ENCODE measurements at regions of chr6 and their contacts with region 1.

Region 1: GRCh38 chr6:133548414-133549159 is 307.4 kb downstream of the EYA4 start:
- DNase-seq: no peak
- H3K4me3 ChIP-seq: no peak overlapping the region
- CTCF ChIP-seq: no peak
- POLR2A ChIP-seq: no peak

Region 2: GRCh38 chr6:133241086-133241900 is 307.3 kb before region 1 on chr6 and contains the start of gene EYA4:
- intact Hi-C with region 1: no loop called
- DNase-seq: no peak
- H3K4me3 ChIP-seq: peak within 1 kb of the TSS; percentile 1
- CTCF ChIP-seq: no peak
- POLR2A ChIP-seq: no peak
- total RNA-seq, gene EYA4: 0.13 to 0.17 TPM in 2 of 4 donors, not detected in the others

Region 3: GRCh38 chr6:134216301-134217010 is 667.9 kb after region 1 on chr6:
- intact Hi-C with region 1: loop called (anchors 10 kb)
- DNase-seq: no peak
- H3K4me3 ChIP-seq: no peak overlapping the region
- CTCF ChIP-seq: no peak
- POLR2A ChIP-seq: no peak

Measured in lower leg skin (tissue), 4 donors.